ENCODE measurements at regions of chr13 and their contacts with region 1.

Region 1: DNA sequence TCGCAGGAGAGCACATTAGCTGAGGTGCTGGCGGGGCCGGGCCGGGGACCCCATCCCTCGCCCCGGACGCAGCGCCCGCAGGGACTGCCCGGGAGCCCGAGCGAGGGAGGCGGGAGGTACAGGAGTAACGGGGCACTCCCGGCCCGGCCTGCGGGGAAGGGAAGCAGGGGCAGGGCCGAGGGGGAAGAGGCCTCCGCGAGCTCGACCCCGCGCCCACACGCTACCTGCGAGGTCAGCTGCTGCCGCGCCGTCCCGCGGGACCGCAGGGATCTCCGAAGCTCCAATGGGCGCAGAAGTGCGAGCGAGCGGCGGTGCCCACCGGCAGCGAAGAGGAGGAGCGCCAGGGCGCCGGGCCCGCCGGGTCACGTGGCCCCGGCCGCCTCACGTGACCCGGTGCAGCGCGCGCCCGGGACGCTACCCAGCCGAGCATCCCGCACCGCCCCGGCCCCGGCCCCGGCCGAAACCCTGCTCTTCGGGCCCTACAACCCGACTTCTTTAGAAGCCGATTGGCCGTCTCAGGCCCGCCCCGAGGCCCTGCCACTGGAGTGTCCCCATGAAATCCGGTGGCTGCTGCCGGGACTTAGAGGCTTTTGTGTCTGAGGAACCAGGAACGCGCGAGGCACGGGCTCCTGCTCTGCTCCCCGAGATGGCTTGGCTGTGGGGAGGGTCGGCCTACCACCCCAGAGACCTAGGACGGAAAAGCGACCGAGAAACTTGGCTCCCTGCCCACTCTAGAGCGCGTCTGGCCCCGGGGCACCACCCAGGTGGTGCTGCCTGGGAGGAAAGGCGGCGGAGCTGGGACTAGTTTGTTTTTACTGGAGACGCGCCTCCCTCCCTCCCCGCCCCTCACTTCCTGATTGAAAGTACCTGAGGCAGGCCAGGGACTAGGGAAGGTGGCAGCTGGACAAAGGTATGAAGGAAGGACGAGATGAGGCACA is at the start of gene RCBTB1:
- DNase-seq: peak; percentile 53
- ATAC-seq: peak; percentile 76
- H3K4me3 ChIP-seq: peak within 1 kb of the TSS; percentile 93
- H3K27ac ChIP-seq: peak within 1 kb of the TSS; percentile 61
- H3K4me1 ChIP-seq: peaks cover 27% of the 10 kb centered on the region
- H3K27me3 ChIP-seq: no peaks in the 10 kb centered on the region
- CTCF ChIP-seq: no peak
- total RNA-seq, gene RCBTB1: 4.9 and 5.4 TPM in 2 replicates

Region 2: GRCh38 chr13:49569956-49570689 is 15.4 kb before region 1 on chr13:
- CTCF ChIA-PET with region 1: no interaction called
- POLR2A ChIA-PET with region 1: no interaction called
- intact Hi-C with region 1: loop called (anchors 2 kb)
- DNase-seq: peak; percentile 87
- ATAC-seq: peak; percentile 98
- H3K4me3 ChIP-seq: no peak overlapping the region
- H3K27ac ChIP-seq: peak overlapping the region; percentile 81
- H3K4me1 ChIP-seq: peaks cover 23% of the 10 kb centered on the region
- H3K27me3 ChIP-seq: no peaks in the 10 kb centered on the region
- CTCF ChIP-seq: no peak